GM12878 (cell line): ENCODE measurements at regions of chr10 and their contacts with region 1.

Region 1: DNA sequence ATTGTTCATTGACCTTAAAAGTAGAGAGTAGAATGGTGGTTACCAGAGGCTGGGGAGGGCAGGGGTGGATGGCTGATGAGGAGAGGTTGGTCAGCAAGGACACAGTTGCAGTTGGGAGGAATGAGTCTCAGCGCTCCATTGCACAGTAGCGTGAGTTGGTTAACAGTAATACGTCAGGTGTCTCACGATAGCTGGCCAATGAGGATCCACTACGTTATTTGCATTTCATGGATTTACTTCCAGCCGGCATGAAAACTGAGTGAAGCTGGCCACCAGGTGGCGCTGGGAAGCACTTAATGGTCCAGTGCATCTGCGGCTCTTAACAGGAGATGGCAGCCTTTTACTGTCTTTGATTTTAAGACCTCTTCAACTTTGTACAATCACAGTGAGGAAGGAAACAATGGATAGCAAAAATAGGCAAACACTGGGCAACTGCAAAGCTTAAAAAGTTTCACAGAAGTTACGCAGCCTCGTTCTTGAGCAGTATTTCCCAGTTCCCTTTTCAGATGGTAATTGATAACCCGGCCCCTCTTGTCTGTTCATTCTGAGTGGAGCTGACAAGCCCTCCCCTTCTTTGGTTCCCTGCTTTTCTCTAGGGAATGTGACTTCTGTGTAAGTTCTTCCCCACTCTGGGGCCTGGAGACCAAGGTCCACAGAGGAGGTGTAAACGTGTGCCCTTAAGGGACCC is 23.7 kb downstream of the AKR1E2 start:
- DNase-seq: peak; percentile 37
- ATAC-seq: peak; percentile 97
- H3K4me3 ChIP-seq: no peak overlapping the region
- H3K27ac ChIP-seq: no peak overlapping the region
- H3K4me1 ChIP-seq: no peaks in the 10 kb centered on the region; the same call in 1 of the 2 replicates
- H3K27me3 ChIP-seq: no peaks in the 10 kb centered on the region
- CTCF ChIP-seq: peak; percentile 84 to 100 (median 99); a peak in 5 of 6 replicates
- EP300 ChIP-seq: peak in 1 of 2 experiments; percentile 12; a peak in 1 of 4 replicates
- POLR2A ChIP-seq: no peak
- RAD21 ChIP-seq: peak; percentile 81

Region 2: DNA sequence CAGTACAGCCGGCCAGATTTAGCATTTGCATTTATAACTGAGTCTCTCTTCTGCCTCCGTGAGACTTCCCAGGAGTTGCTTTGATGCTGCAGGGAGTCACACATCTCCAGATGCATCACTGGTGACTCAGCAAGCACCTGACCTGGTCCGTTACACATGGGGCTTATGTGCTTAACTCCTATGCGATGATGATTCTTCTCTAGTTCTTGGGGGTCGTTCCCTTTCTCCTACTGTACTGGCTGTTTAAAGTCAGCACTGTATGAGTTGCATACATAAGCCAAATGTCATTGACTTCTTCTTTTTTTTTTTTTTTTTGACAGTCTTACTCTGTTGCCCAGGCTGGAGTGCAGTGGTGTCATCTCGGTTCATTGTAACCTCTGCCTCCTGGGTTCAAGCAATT is 36.7 kb before region 1 on chr10:
- CTCF ChIA-PET with region 1: interaction called, 22 read pairs
- POLR2A ChIA-PET with region 1: no interaction called
- RAD21 ChIA-PET with region 1: interaction called, 6 read pairs
- SMC1A ChIA-PET with region 1: interaction called, 12 read pairs
- in situ Hi-C with region 1: no loop called
- intact Hi-C with region 1: no loop called
- DNase-seq: no peak
- ATAC-seq: no peak
- H3K4me3 ChIP-seq: no peak overlapping the region
- H3K27ac ChIP-seq: no peak overlapping the region
- H3K4me1 ChIP-seq: no peaks in the 10 kb centered on the region
- H3K27me3 ChIP-seq: peaks cover 0 to 2% of the 10 kb centered on the region in 2 experiments; a peak in 1 of 4 replicates
- CTCF ChIP-seq: no peak
- EP300 ChIP-seq: no peak
- POLR2A ChIP-seq: no peak
- RAD21 ChIP-seq: no peak

Region 3: DNA sequence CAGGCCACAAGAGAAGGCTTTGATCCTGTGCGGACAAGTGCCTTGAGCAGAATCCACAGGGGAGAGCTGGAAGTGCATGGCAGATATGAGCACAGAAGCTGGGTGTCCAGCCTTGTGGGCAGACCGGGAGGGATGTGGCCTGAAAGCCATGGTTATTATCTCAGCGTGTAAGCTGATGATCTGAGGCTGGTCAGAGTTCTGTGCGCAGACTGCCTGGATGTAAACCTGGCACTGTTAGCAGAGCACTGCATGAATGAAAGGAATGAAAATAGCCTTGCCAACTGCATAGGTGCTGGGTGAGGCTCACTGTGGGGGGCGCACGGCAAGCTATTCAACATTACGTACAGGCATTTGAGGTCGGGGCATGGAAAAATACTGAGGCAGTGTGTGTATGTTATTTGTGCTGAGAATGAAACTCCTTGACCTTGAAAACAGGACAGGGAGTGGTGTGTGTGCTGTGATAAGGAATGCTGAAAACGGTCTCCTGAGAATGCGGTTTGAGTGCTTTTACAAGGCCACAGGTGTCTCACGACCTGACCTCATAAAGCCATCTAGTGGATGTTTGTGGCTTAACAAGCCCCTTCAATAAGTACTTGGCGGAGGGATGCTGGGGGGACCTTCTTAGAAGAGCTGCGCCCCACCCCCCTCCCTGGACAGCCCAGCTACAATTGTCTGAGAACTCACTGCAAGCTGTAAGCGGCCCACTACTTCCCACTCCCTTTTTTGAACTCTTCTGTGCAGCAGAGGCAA is 132.2 kb after region 1 on chr10:
- CTCF ChIA-PET with region 1: interaction called, 13 read pairs
- POLR2A ChIA-PET with region 1: no interaction called
- RAD21 ChIA-PET with region 1: interaction called, 4 read pairs
- SMC1A ChIA-PET with region 1: interaction called, 3 read pairs
- in situ Hi-C with region 1: no loop called
- intact Hi-C with region 1: loop called (anchors 5 kb)
- DNase-seq: no peak
- ATAC-seq: peak; percentile 52
- H3K4me3 ChIP-seq: no peak overlapping the region
- H3K27ac ChIP-seq: no peak overlapping the region
- H3K4me1 ChIP-seq: no peaks in the 10 kb centered on the region
- H3K27me3 ChIP-seq: no peaks in the 10 kb centered on the region
- CTCF ChIP-seq: peak; percentile 33 to 40 (median 38); a peak in 5 of 6 replicates
- EP300 ChIP-seq: no peak
- POLR2A ChIP-seq: no peak
- RAD21 ChIP-seq: peak; percentile 23; the same call in 1 of the 2 replicates

Region 4: GRCh38 chr10:5283305-5284158 is 433.8 kb after region 1 on chr10:
- CTCF ChIA-PET with region 1: interaction called, 11 read pairs
- POLR2A ChIA-PET with region 1: no interaction called
- RAD21 ChIA-PET with region 1: interaction called, 4 read pairs
- SMC1A ChIA-PET with region 1: interaction called, 3 read pairs
- in situ Hi-C with region 1: loop called (anchors 10 kb)
- intact Hi-C with region 1: loop called (anchors 2 kb)
- DNase-seq: no peak
- ATAC-seq: peak; percentile 95
- H3K4me3 ChIP-seq: no peak overlapping the region
- H3K27ac ChIP-seq: no peak overlapping the region
- H3K4me1 ChIP-seq: no peaks in the 10 kb centered on the region
- H3K27me3 ChIP-seq: no peaks in the 10 kb centered on the region
- CTCF ChIP-seq: peak; percentile 62 to 66 (median 65); a peak in 5 of 6 replicates
- EP300 ChIP-seq: no peak
- POLR2A ChIP-seq: no peak
- RAD21 ChIP-seq: peak; percentile 58

Region 5: DNA sequence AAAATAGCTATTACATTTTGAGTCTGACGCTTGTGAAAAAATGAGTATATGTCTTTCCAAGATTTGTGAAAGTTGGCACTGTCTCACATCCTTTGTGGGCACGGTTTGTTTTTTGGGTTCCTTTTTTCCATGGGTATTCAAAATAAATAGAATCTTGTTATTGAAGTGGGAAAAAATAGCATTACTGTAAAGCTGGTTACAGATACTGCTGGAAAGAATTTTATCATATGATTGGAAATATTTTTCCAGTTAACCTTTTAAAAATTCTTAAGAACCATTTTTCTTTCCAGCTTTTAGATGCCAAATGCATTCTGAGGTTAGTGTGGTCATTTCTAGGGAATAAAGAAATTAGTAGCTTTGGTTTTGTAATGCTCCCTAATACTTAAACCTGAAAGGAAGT is 574.1 kb after region 1 on chr10:
- CTCF ChIA-PET with region 1: interaction called, 26 read pairs
- POLR2A ChIA-PET with region 1: interaction called, 3 read pairs
- RAD21 ChIA-PET with region 1: interaction called, 3 read pairs
- SMC1A ChIA-PET with region 1: interaction called, 3 read pairs
- in situ Hi-C with region 1: no loop called
- intact Hi-C with region 1: no loop called
- DNase-seq: no peak
- ATAC-seq: no peak
- H3K4me3 ChIP-seq: no peak overlapping the region
- H3K27ac ChIP-seq: no peak overlapping the region
- H3K4me1 ChIP-seq: no peaks in the 10 kb centered on the region
- H3K27me3 ChIP-seq: no peaks in the 10 kb centered on the region
- CTCF ChIP-seq: no peak
- EP300 ChIP-seq: no peak
- POLR2A ChIP-seq: no peak
- RAD21 ChIP-seq: no peak